HEK293 (cell line): ENCODE measurements at regions of chr6 and their contacts with region 1.

Region 1: GRCh38 chr6:2103644-2104523 is 141.5 kb downstream of the GMDS start:
- H3K4me3 ChIP-seq: no peak overlapping the region; the same call in 1 of the 2 replicates
- H3K27ac ChIP-seq: peak overlapping the region; percentile 80
- H3K4me1 ChIP-seq: peaks cover 40% of the 10 kb centered on the region
- CTCF ChIP-seq: peak; percentile 62; the same call in 1 of the 2 replicates

Region 2: GRCh38 chr6:1596088-1596852 is 507.6 kb before region 1 on chr6:
- CTCF ChIA-PET with region 1: interaction called, 43 read pairs
- POLR2A ChIA-PET with region 1: no interaction called
- H3K4me3 ChIP-seq: peak overlapping the region; percentile 5
- H3K27ac ChIP-seq: peak overlapping the region; percentile 90
- H3K4me1 ChIP-seq: peaks cover 31% of the 10 kb centered on the region
- CTCF ChIP-seq: peak; percentile 94

Region 3: DNA sequence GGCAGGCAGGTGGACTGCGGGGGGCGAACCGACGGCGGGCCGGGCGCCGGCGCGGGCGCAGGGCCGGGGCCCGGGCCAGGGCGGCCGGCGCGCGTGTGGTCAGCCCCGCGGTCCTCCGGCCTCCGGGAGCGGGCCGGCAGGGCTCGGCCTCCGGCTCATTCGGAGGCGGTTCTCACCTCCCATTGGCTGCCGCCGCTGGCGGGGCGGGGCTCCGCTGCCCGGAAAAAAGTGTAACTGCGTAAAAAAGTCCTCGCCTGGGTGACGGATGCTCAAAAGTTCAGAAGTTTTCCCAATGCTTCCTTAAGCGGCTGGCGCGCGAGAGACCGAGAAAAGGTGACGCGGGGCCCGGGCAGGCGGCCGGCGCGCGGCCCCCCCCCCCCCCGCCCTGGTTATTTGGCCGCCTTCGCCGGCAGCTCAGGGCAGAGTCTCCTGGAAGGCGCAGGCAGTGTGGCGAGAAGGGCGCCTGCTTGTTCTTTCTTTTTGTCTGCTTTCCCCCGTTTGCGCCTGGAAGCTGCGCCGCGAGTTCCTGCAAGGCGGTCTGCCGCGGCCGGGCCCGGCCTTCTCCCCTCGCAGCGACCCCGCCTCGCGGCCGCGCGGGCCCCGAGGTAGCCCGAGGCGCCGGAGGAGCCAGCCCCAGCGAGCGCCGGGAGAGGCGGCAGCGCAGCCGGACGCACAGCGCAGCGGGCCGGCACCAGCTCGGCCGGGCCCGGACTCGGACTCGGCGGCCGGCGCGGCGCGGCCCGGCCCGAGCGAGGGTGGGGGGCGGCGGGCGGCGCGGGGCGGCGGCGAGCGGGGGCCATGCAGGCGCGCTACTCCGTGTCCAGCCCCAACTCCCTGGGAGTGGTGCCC is 494.0 kb before region 1 on chr6 and contains the start of gene FOXC1:
- CTCF ChIA-PET with region 1: interaction called, 15 read pairs
- POLR2A ChIA-PET with region 1: interaction called, 17 read pairs
- H3K4me3 ChIP-seq: peak within 1 kb of the TSS; percentile 59
- H3K27ac ChIP-seq: peak within 1 kb of the TSS; percentile 100
- H3K4me1 ChIP-seq: peaks cover 2% of the 10 kb centered on the region; the same call in 1 of the 2 replicates
- CTCF ChIP-seq: no peak

Region 4: GRCh38 chr6:1893470-1894130 is 210.3 kb before region 1 on chr6:
- CTCF ChIA-PET with region 1: interaction called, 13 read pairs
- POLR2A ChIA-PET with region 1: no interaction called
- H3K4me3 ChIP-seq: no peak overlapping the region
- H3K27ac ChIP-seq: no peak overlapping the region; the same call in 1 of the 2 replicates
- H3K4me1 ChIP-seq: no peaks in the 10 kb centered on the region; the same call in 1 of the 2 replicates
- CTCF ChIP-seq: no peak

Region 5: DNA sequence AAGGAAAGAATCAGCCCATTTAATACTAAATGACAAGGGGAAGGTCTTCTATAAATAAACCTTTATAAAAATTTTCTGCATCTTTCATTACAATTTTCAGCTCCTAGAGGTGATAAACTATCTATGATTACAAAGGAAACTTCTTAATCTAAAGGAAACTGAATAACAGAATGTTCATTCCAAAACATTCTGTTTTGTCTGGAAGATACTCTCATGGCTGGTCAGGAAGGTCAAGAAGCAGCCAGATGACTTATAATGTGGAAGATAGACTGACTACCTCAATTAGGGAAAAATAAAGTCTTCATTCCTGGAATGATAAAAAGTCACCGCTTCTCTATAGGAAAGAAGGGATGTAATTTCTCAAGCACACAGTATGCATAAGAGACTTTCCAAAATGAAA is 10.2 kb after region 1 on chr6:
- CTCF ChIA-PET with region 1: interaction called, 17 read pairs
- POLR2A ChIA-PET with region 1: no interaction called
- H3K4me3 ChIP-seq: no peak overlapping the region
- H3K27ac ChIP-seq: no peak overlapping the region
- H3K4me1 ChIP-seq: peaks cover 15% of the 10 kb centered on the region
- CTCF ChIP-seq: no peak

Region 6: DNA sequence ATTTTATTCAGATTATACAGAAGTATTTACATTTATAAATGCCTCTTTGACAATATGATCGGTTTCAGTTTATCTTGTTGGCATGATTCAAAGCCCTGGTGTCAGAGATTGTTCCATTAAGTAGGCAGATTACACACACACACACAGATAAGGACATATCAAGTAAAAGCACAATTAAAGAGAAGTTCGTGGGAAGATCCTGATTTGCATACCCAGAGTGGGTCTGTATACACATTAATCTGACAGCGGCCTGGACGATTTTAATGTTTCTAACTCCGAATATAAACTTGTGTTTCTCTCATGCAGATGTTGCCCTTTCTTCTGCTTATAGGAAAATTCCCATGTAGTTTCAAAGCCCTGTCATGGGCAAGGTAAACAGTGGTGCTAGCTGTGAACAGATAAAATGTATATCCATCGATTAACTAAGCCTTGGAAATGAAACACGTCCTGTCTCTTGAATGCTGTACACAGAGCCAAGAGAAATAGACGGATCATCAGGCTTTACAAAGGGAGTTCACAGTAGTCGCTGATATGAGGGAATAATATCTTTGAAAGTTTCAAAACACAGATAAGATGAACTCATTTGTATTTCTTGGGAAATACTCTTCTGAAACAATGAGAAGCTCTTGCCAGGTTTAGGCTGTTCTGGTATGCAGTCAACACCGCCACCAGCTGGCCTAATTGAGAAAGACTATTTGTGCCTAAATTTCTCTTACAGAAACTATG is 249.7 kb after region 1 on chr6:
- CTCF ChIA-PET with region 1: interaction called, 11 read pairs
- POLR2A ChIA-PET with region 1: no interaction called
- H3K4me3 ChIP-seq: no peak overlapping the region
- H3K27ac ChIP-seq: peak overlapping the region; percentile 52; the same call in 1 of the 2 replicates
- H3K4me1 ChIP-seq: peaks cover 7% of the 10 kb centered on the region
- CTCF ChIP-seq: peak; percentile 48